ENCODE measurements at regions of chr11 and their contacts with region 1.

Region 1: GRCh38 chr11:118928108-118928870 is 2.6 kb upstream of the BCL9L start:
- DNase-seq: peak; percentile 95
- H3K4me3 Mint-ChIP-seq: peak overlapping the region; percentile 94
- H3K27ac Mint-ChIP-seq: peak overlapping the region; percentile 98
- H3K4me1 Mint-ChIP-seq: peaks cover 44% of the 10 kb centered on the region
- H3K27me3 Mint-ChIP-seq: no peaks in the 10 kb centered on the region

Region 2: DNA sequence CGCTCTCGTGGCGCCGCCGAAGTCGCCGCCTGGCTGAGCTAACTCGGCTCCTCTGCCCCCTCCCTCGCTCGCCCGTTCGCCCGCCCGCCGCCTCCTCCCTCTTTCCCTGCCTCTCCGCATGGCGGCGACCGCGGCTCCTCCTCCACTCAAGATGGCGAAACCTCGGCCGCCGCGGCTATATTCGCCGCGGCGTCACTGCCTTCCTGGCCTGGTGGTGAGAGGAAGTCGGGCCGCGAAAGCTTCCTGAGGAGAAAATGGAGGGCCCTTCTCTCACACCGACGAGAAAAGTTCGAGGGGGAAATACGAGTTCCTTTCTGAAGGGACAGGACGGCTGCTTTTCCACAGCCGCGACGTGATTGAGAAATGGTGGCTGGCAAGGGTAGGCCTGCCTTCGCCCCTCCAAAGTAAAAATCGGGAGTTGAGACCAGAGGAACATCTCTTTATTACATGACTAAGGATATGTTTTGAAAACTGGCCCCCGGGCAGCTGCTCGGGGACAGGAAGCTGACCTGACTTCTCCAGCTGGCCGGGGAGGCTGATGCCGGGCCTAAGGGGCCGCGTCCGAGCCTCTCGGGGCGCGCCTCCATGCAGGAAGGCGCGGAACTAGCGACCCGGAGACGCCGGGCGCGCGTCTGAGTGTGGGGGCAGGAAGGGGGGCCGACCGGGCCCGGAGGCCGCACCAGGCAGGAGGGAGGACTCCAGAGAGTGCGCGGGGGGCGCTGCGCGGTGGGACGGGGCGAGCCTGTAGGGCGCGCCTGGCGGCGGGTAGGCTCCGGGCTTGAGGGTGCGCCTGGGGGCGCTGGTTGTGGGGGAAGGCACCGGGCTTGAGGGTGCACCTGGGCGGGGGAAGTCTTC is 137.0 kb before region 1 on chr11 and contains the start of gene DDX6:
- CTCF ChIA-PET with region 1: interaction called, 9 read pairs
- POLR2A ChIA-PET with region 1: interaction called, 13 read pairs
- intact Hi-C with region 1: loop called (anchors 2 kb)
- DNase-seq: peak; percentile 94
- H3K4me3 Mint-ChIP-seq: peak within 1 kb of the TSS; percentile 94
- H3K27ac Mint-ChIP-seq: peak within 1 kb of the TSS; percentile 99
- H3K4me1 Mint-ChIP-seq: peaks cover 22% of the 10 kb centered on the region
- H3K27me3 Mint-ChIP-seq: no peaks in the 10 kb centered on the region
- total RNA-seq, gene DDX6: 175 to 180 TPM

Region 3: GRCh38 chr11:118883368-118884071 is 44.8 kb before region 1 on chr11 and contains the start of gene CXCR5:
- CTCF ChIA-PET with region 1: interaction called, 12 read pairs
- POLR2A ChIA-PET with region 1: interaction called, 3 read pairs
- intact Hi-C with region 1: no loop called
- DNase-seq: peak; percentile 84
- H3K4me3 Mint-ChIP-seq: peak within 1 kb of the TSS; percentile 85
- H3K27ac Mint-ChIP-seq: peak within 1 kb of the TSS; percentile 99
- H3K4me1 Mint-ChIP-seq: peaks cover 81% of the 10 kb centered on the region
- H3K27me3 Mint-ChIP-seq: no peaks in the 10 kb centered on the region
- total RNA-seq, gene CXCR5: 28.0 to 28.3 TPM

Region 4: DNA sequence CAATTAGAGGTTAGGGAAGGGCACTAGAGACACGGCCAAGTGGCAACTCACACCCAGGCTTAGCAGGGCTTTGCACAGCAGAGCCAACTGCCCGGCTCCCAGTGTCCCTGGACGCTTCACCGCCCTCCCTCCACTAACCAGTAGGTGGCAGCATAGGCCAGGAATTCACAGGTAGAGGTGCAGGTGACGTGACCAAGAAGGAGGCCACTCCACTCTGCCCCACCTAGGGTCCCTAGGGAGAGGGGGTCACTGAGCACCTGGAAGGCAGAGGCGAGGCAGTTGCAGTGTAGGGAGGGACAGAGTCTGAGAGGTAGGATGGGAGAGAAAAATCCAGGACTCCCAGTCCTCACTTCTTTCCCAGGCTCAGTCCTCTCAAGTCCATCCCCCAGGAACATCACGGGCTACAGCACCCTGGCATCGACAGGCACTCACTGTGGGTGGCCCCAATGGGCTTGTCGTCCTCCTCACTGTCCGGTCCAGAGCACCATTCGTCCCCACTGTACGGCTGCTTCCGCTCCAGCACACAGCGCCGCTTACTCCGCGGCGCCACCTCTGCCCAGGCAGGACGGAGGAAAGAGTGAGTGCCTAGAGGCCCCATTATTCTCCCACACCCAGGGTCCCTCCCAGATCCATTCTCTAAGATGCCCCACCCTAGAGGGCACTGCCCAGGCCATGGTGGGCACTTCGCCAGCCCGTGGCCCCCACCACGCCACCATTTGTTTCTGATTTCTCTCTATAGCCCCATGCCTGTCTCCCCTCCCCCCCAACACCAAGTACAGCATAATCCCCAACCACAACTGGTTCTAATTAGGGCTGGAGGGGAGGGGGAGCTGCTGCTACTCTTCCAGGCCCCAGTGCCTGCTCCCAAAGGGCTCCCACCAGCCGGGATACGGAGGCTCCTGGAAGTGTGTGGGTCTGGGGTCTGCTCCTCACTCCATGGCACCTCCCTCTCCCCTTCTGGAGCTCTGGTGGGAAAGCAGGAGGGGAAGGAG is 20.9 kb before region 1 on chr11:
- CTCF ChIA-PET with region 1: interaction called, 311 read pairs
- POLR2A ChIA-PET with region 1: interaction called, 56 read pairs
- intact Hi-C with region 1: loop called (anchors 1 kb)
- DNase-seq: peak; percentile 93
- H3K4me3 Mint-ChIP-seq: no peak overlapping the region
- H3K27ac Mint-ChIP-seq: peak overlapping the region; percentile 65
- H3K4me1 Mint-ChIP-seq: peaks cover 44% of the 10 kb centered on the region
- H3K27me3 Mint-ChIP-seq: no peaks in the 10 kb centered on the region

Region 5: DNA sequence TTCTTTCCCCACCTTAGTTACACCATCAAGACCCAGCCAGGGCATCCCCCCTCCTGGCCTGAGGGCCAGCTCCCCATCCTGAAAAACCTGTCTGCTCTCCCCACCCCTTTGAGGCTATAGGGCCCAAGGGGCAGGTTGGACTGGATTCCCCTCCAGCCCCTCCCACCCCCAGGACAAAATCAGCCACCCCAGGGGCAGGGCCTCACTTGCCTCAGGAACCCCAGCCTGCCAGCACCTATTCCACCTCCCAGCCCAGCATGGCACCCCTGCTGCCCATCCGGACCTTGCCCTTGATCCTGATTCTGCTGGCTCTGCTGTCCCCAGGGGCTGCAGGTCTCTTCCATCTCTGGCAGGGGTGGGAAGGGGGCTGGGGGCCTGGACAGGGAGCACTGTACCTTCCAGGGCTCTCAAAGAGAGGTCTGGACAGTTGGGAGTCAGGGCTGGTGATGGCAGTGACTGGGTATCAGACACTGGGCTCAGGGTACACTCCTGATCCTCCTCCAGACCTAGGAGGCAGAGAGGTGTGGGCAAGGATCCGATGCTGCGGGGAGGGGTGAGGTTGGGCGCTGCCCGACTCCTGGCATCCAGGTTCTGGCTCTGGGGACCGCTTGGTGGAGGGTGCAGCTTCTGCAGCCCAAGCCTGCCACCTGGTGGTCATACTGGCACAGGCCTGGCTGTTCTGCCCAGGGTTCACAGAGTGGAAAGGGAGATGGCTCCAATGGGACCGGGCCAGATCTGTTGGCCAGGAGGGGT is 28.0 kb after region 1 on chr11 and contains the start of gene UPK2:
- CTCF ChIA-PET with region 1: interaction called, 11 read pairs
- POLR2A ChIA-PET with region 1: no interaction called
- intact Hi-C with region 1: loop called (anchors 1 kb)
- DNase-seq: peak; percentile 93
- H3K4me3 Mint-ChIP-seq: no peak within 1 kb of the TSS
- H3K27ac Mint-ChIP-seq: no peak within 1 kb of the TSS
- H3K4me1 Mint-ChIP-seq: peaks cover 3% of the 10 kb centered on the region
- H3K27me3 Mint-ChIP-seq: peaks cover 4% of the 10 kb centered on the region
- total RNA-seq, gene UPK2: not detected

Region 6: DNA sequence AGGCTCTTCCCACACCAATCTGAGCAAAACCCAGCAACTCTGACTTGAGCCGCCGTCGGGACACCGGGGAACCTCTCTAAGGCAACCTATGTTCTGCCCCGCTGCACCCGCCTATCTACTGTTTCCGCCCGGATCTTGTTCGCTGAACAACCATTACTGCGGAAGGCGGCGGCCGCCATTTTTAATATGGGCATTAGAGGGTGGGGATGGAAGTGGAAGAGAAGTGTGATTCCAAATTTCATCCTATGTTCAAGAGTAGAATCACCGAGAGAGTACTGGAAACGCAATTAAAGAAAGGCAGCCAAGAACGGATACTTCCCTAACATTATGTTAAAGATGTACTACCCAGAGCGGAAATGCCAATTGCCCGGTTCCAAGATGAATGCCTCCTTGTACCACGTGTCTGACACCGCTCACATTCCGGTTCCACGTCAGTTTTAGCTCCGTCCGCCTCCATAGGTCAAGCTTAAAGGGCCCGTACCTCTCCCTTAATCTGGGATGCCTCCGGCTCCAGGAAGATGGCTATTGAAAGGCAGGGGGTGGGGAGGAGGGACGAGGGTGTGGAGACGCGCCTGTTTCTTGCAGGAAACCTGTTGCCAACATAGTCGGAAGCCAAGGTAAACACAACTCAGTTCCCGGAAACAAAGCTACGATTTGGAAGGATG is 173.6 kb after region 1 on chr11 and contains the start of gene DPAGT1:
- CTCF ChIA-PET with region 1: no interaction called
- POLR2A ChIA-PET with region 1: no interaction called
- intact Hi-C with region 1: loop called (anchors 5 kb)
- DNase-seq: peak; percentile 92
- H3K4me3 Mint-ChIP-seq: peak within 1 kb of the TSS; percentile 92
- H3K27ac Mint-ChIP-seq: peak within 1 kb of the TSS; percentile 92
- H3K4me1 Mint-ChIP-seq: peaks cover 33% of the 10 kb centered on the region
- H3K27me3 Mint-ChIP-seq: no peaks in the 10 kb centered on the region
- total RNA-seq, gene DPAGT1: 64.4 to 66.9 TPM

Measured in activated CD4-positive, alpha-beta memory T cell treated with anti-CD3 and anti-CD28 coated beads for 36 hours (primary cell).